BJ (cell line): ENCODE measurements at regions of chr5 and their contacts with region 1.

Region 1: DNA sequence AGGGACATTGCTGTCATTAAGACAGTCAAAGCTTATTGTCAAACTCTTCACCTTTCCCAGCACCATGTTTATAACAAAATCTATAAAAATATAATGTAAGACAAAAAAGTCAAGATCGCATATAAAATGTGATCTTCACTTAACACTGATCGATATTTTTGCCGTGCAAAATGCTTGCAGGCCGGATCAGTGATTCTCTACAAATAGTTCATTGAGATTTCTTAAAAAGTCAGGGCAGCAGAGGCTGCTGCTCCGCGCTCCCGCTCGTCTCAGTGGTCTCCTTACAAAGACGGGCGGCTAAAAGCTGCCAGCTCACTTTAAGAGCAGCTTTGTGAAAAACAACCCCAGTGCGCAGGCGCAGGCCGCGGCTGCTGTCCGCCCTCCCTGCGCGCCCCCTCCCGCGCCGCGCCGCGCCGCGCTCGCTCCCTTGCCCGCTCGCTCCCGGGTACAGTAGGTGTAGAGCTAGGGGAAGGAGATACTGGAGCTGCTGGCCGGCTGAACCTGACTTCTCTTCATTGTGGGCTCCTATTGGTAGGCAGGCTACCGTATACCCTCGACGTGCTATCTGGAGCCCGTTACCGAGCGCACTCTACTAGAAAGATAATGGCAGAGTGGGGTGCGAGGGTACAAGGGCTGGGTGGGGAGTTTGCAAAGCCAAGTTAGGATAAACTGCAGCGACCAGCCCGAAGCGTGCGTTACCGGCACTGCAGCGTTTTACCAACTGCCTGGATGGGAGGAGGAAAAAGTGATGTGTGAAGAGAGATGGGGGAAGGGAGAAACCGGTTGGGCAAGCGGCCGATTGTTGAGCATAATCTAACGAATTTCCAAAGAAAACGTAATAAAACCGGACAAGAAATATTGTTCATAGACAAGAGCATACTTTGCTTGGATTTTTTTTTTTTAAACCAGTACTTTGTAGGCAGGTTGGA is at the start of gene ARRDC3:
- DNase-seq: peak; percentile 87
- H3K4me3 ChIP-seq: peak within 1 kb of the TSS; percentile 64
- H3K27me3 ChIP-seq: no peaks in the 10 kb centered on the region
- CTCF ChIP-seq: no peak
- polyA plus RNA-seq, gene ARRDC3: 20.7 and 37.4 TPM in 2 replicates

Region 2: GRCh38 chr5:91090995-91091394 is 292.3 kb before region 1 on chr5:
- CTCF ChIA-PET with region 1: interaction called, 11 read pairs
- POLR2A ChIA-PET with region 1: interaction called, 3 read pairs
- DNase-seq: no peak
- H3K4me3 ChIP-seq: no peak overlapping the region
- H3K27me3 ChIP-seq: no peaks in the 10 kb centered on the region
- CTCF ChIP-seq: no peak

Region 3: GRCh38 chr5:91132550-91132949 is 250.7 kb before region 1 on chr5:
- CTCF ChIA-PET with region 1: interaction called, 3 read pairs
- POLR2A ChIA-PET with region 1: interaction called, 16 read pairs
- DNase-seq: no peak
- H3K4me3 ChIP-seq: no peak overlapping the region
- H3K27me3 ChIP-seq: no peaks in the 10 kb centered on the region
- CTCF ChIP-seq: no peak

Region 4: GRCh38 chr5:91183737-91184136 is 199.6 kb before region 1 on chr5:
- CTCF ChIA-PET with region 1: interaction called, 12 read pairs
- POLR2A ChIA-PET with region 1: interaction called, 6 read pairs
- DNase-seq: no peak
- H3K4me3 ChIP-seq: no peak overlapping the region
- H3K27me3 ChIP-seq: no peaks in the 10 kb centered on the region
- CTCF ChIP-seq: no peak

Region 5: DNA sequence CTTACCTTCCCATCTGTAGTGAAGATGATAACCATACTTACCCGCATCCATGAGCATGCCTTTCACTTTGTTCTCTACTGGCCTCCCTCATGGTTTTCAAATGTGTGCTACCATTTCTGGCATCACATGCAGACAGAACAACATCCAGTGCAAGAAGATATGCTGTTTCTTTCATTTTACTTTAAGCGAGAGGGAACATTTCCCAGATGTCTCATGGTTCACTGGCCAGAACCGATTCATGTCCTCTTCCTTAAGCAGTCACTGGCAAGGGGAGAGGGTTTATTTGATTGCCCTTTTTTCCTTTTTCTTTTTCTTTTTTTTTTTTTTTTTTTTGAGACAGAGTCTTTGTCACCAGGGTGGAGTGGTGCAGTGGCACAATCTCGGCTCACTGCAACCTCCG is 37.8 kb before region 1 on chr5:
- CTCF ChIA-PET with region 1: no interaction called
- POLR2A ChIA-PET with region 1: no interaction called
- DNase-seq: no peak
- H3K4me3 ChIP-seq: no peak overlapping the region
- H3K27me3 ChIP-seq: no peaks in the 10 kb centered on the region
- CTCF ChIP-seq: no peak

Region 6: DNA sequence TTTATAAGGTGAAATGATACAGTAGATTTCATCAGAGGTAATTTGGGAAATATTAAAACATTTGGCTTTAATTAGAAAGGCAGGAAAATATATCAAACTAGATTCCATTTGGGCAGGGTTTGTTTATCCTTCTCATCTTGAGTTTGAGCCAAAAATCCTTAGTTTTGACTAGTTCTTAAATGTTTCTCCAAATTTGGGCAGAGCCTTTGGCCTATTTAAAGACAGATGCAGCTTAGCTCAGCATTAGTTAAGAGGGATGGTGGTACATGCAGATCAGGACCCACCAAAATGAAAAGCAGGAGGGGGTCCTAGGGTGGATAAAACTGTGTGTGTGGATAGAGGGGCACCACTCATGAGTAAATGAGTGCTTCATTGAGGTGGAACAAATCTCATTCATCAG is 20.1 kb after region 1 on chr5:
- CTCF ChIA-PET with region 1: interaction called, 13 read pairs
- POLR2A ChIA-PET with region 1: no interaction called
- DNase-seq: peak; percentile 58
- H3K4me3 ChIP-seq: no peak overlapping the region
- H3K27me3 ChIP-seq: no peaks in the 10 kb centered on the region
- CTCF ChIP-seq: no peak

Region 7: DNA sequence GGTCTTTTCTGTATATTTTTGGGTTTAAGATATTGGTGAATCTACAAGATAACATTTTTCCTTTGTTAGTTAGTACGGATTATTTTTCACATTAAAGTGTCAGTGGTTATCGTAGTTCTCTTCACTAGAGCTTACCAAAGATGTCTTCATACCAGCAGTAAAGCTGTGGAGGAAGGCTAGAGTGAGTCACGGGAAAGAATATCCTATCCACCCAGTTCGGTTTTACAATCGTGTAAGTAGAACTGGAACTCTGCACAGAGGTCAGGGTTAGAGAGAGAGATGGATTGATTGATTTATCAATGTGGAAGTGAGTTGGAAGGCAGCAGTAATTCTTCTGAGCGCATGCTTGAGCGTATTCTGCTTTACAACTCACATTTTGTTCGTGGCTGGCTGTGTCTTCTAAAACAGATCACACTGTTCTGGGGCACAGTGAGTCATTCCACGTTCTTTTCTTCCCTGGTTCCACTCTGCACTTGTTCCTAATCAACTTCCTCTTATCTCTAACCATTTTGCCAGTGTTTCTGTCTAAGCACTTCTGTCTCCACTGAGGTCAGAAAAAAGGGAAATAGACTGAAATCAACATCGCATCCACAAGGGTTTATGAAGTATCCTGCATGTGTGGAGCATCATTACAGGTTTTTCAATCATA is 86.3 kb after region 1 on chr5:
- CTCF ChIA-PET with region 1: no interaction called
- POLR2A ChIA-PET with region 1: no interaction called
- DNase-seq: no peak
- H3K4me3 ChIP-seq: no peak overlapping the region
- H3K27me3 ChIP-seq: no peaks in the 10 kb centered on the region
- CTCF ChIP-seq: no peak